ENCODE measurements at regions of chr11 and their contacts with region 1.

Region 1: DNA sequence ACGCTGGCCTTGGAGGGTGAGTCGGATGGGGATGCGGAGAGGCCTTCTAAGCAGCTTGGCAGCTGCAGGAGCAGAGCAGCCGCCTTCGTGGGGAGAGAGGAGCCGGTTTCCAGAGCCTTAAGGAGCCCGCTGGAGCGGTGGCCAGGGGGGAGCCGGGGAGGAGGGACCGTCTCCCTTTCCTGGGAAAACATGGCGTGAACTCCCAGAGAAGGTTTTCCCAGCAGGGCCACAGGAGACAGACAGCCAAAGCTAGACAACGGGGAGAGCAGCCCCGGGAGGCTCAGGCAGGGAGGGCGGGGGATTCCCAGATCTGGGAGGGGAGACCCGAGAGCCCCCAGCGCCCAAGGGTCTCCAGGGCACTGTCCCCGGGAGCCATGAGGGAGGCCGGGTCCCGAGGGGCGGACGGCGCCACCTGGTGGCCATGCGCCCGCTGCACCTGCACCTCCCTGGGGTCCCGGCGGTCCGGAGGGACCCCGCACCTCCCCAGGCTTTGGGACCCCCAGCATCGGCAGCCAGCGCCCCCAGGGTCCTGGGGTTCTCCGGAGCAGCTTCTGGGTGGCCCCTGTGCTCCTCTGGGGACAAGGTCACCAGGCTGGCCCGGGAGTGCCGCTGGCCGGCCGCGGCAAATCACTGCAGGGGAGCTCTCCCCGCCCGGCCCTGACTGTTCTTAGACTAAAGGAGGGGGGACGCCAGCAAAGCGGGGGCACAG is 2.4 kb upstream of the SYT8 start:
- DNase-seq: no peak
- H3K4me3 ChIP-seq: no peak overlapping the region
- H3K27ac ChIP-seq: no peak overlapping the region
- H3K27me3 ChIP-seq: peaks cover 11% of the 10 kb centered on the region
- CTCF ChIP-seq: peak; percentile 96

Region 2: DNA sequence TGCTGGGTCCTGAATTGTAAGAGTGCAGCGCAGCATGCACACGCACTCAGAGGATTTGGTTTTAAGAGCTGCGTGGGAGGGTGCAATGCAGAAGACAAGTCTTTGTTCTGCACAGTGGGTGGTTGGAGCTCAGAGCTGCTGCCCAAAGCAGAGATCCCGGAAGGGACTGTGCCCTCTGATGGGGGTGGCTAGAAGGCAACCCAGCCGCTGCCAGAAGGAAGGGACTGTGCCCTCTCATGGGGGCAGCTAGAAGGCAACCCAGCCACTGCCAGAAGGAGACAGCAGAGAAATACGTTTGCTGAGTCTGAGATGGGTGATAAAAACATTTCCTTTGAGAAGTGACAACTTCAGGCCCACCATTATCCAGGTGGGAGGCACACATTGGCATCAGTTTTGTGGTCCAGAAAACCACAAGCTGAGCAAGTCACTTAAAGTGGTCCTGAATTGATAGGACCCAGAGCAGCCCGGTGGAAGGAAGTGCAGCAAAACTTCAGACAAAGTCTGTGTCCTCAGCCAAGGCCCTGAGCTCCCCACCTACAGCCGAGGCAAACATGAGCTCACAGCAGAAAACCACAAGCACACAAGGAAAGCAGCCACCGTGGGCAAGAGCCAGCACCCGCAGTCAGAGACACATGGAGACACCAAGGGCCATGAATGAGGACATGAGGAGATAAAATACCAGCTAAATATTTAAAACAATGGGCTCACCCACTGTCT is 131.1 kb before region 1 on chr11:
- CTCF ChIA-PET with region 1: interaction called, 19 read pairs
- POLR2A ChIA-PET with region 1: no interaction called
- DNase-seq: no peak
- H3K4me3 ChIP-seq: no peak overlapping the region
- H3K27ac ChIP-seq: no peak overlapping the region
- H3K27me3 ChIP-seq: peaks cover 30% of the 10 kb centered on the region
- CTCF ChIP-seq: no peak

Region 3: GRCh38 chr11:1706634-1707400 is 125.5 kb before region 1 on chr11:
- CTCF ChIA-PET with region 1: interaction called, 19 read pairs
- POLR2A ChIA-PET with region 1: no interaction called
- DNase-seq: no peak
- H3K4me3 ChIP-seq: no peak overlapping the region
- H3K27ac ChIP-seq: no peak overlapping the region
- H3K27me3 ChIP-seq: peaks cover 43% of the 10 kb centered on the region
- CTCF ChIP-seq: 0 out of 2 replicates have a peak, but pooled peaks have one; percentile 8

Region 4: DNA sequence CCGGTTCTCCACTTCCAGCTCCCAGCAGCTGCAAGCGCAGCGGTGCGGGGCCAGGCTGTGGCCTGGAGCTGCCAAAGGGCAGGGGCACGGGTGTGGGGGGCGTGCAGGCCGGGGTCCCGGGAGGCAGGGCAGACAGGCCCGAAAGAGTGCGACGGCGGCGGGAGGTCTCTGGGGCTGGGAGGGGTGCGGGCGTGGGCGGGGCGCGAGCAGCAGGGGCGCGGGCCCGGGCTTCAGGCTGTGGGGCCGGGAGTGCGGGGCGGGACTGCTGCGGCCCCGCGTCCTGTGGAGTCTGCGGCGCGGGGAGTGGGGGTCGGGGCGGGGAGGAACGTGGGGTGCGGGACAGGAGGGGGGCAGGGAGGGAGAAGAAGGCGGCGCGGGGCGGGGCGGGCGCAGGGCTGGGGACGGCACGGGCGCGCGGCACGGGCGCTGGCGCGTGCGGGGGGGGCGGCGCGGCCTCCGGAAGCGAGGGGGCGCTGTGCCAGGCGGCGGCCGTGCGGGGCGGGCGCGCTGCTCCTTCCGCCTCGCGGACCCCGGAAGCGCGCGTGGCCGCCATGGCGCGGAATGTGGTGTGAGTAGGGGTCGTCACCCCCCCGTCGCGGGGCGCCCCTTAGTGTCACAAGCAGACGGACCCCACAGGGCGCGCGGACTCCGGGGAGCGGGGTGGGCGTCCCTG is 114.6 kb after region 1 on chr11 and contains the start of gene MRPL23:
- CTCF ChIA-PET with region 1: interaction called, 22 read pairs
- POLR2A ChIA-PET with region 1: interaction called, 3 read pairs
- DNase-seq: no peak
- H3K4me3 ChIP-seq: no peak within 1 kb of the TSS
- H3K27ac ChIP-seq: no peak within 1 kb of the TSS
- H3K27me3 ChIP-seq: no peaks in the 10 kb centered on the region
- CTCF ChIP-seq: no peak
- polyA plus RNA-seq, gene MRPL23: 63.3 and 78.3 TPM in 2 replicates

Region 5: GRCh38 chr11:2002807-2003206 is 170.4 kb after region 1 on chr11:
- CTCF ChIA-PET with region 1: interaction called, 10 read pairs
- POLR2A ChIA-PET with region 1: no interaction called
- DNase-seq: no peak
- H3K4me3 ChIP-seq: no peak overlapping the region
- H3K27ac ChIP-seq: no peak overlapping the region
- H3K27me3 ChIP-seq: no peaks in the 10 kb centered on the region
- CTCF ChIP-seq: no peak